Calu3 (cell line): ENCODE measurements at regions of chr16 and their contacts with region 1.

Region 1: DNA sequence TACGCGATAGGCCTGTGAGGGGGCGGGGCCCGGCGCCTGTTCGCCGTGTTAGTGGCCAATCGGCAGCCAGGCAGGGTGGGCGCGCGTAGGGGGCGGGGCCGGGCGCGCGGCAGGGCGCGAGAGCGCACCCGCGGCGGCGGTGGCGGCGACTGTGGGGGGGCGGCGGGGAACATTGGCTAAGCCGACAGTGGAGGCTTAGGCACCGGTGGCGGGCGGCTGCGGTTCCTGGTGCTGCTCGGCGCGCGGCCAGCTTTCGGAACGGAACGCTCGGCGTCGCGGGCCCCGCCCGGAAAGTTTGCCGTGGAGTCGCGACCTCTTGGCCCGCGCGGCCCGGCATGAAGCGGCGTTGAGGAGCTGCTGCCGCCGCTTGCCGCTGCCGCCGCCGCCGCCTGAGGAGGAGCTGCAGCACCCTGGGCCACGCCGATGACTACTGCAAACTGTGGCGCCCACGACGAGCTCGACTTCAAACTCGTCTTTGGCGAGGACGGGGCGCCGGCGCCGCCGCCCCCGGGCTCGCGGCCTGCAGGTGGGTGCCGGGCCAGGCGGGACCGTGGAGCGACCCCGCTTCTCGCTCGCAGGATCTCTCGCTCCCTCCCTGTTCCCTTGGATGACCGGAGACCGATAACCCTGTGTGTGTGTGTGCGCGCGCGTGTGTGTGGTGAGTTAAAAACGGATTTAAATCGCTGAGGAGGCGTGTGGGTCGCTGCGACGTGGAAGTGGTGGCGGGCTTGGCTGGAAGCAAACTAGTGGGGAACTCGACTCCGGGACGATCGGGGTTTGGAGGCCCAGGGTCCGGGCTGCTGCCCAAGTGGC is at the start of gene NFATC3:
- DNase-seq: peak; percentile 99
- H3K4me3 Mint-ChIP-seq: peak within 1 kb of the TSS; percentile 84
- H3K27ac Mint-ChIP-seq: peak within 1 kb of the TSS; percentile 75
- H3K4me1 Mint-ChIP-seq: peaks cover 28% of the 10 kb centered on the region
- H3K27me3 Mint-ChIP-seq: no peaks in the 10 kb centered on the region
- CTCF ChIP-seq: no peak
- total RNA-seq, gene NFATC3: 39.3 and 39.9 TPM in 2 replicates

Region 2: GRCh38 chr16:67806428-67807147 is 278.9 kb before region 1 on chr16 and contains the starts of genes RANBP10 and TSNAXIP1:
- CTCF ChIA-PET with region 1: no interaction called
- intact Hi-C with region 1: loop called (anchors 5 kb)
- DNase-seq: peak; percentile 98
- H3K4me3 Mint-ChIP-seq: peak within 1 kb of the TSS; percentile 96
- H3K27ac Mint-ChIP-seq: peak within 1 kb of the TSS; percentile 76
- H3K4me1 Mint-ChIP-seq: peaks cover 11% of the 10 kb centered on the region
- H3K27me3 Mint-ChIP-seq: no peaks in the 10 kb centered on the region
- CTCF ChIP-seq: no peak
- total RNA-seq, gene RANBP10: 25.5 and 28.2 TPM in 2 replicates
- total RNA-seq, gene TSNAXIP1: 1.0 and 1.3 TPM in 2 replicates

Region 3: DNA sequence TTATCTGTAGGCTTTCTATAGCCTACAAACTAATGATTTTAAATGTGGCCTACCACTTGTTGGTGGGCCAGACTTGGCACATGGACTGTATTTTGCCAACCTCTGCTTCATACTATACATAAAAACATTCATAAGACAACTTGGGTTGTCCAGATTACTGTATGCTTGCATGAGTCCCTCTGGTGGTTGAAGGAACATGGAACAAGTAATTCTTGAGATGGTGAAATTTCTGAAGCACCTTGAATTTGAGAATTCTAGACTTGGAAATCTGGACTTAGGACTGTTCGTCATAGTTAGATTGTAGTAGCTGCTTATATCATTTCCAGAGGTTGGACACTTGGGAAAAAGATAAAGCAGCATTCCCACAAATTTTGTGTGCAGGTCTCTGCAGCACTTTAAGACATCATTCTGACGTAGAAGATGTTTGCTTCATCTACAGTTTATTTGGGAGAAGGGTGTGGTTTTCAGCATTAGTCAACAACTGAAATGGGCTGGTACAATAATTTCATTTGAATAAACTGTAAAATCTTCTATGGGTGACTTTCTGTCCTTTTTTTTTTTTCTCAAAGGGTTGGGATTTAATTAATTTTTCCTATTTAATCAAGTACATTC is 30.9 kb after region 1 on chr16:
- CTCF ChIA-PET with region 1: no interaction called
- intact Hi-C with region 1: no loop called
- DNase-seq: no peak
- H3K4me3 Mint-ChIP-seq: no peak overlapping the region
- H3K27ac Mint-ChIP-seq: no peak overlapping the region
- H3K4me1 Mint-ChIP-seq: peaks cover 8% of the 10 kb centered on the region
- H3K27me3 Mint-ChIP-seq: no peaks in the 10 kb centered on the region
- CTCF ChIP-seq: peak; percentile 17

Region 4: DNA sequence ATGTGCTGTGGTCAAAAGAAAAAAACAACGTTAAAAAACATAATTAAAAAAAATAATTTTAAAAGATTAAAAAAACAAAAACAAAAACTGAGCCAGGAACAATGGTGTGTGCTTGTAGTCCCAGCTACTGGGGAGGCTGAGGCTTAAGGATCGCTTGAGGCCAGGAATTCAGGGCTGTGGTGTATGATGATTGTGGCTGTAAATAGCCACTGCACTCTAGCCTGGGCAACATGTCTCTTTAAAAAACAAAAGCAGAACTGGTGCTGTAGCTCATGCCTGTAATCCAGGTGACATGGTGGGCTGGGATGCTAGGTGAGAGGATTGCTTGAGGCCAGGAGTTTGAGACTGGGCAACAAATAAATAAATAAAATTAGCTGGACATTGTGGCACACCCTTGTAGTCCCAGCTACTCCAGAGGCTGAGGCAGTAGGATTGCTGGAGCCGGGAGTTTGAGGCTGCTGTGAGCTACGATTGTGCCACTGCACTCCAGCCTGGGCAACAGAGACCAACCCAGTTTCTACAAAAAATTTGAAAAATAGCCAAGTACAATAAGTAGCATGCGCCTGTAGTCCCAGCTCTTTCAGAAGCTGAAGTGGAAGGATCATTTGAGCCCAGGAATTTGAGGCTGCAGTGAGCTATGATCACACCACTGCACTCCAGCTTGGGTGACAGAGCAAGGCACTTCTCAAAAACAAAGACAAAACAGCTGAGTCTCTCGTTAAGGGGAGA is 43.3 kb after region 1 on chr16:
- CTCF ChIA-PET with region 1: interaction called, 3 read pairs
- intact Hi-C with region 1: loop called (anchors 5 kb)
- DNase-seq: no peak
- H3K4me3 Mint-ChIP-seq: no peak overlapping the region
- H3K27ac Mint-ChIP-seq: no peak overlapping the region
- H3K4me1 Mint-ChIP-seq: peaks cover 9% of the 10 kb centered on the region
- H3K27me3 Mint-ChIP-seq: no peaks in the 10 kb centered on the region
- CTCF ChIP-seq: no peak

Region 5: GRCh38 chr16:68166264-68166663 is 80.8 kb after region 1 on chr16:
- CTCF ChIA-PET with region 1: interaction called, 11 read pairs
- intact Hi-C with region 1: no loop called
- DNase-seq: no peak
- H3K4me3 Mint-ChIP-seq: no peak overlapping the region
- H3K27ac Mint-ChIP-seq: no peak overlapping the region
- H3K4me1 Mint-ChIP-seq: no peaks in the 10 kb centered on the region
- H3K27me3 Mint-ChIP-seq: no peaks in the 10 kb centered on the region
- CTCF ChIP-seq: no peak

Region 6: GRCh38 chr16:68229431-68230198 is 144.2 kb after region 1 on chr16:
- CTCF ChIA-PET with region 1: interaction called, 6 read pairs
- intact Hi-C with region 1: loop called (anchors 2 kb)
- DNase-seq: peak; percentile 63
- H3K4me3 Mint-ChIP-seq: no peak overlapping the region
- H3K27ac Mint-ChIP-seq: no peak overlapping the region
- H3K4me1 Mint-ChIP-seq: peaks cover 22% of the 10 kb centered on the region
- H3K27me3 Mint-ChIP-seq: no peaks in the 10 kb centered on the region
- CTCF ChIP-seq: peak; percentile 90

Region 7: GRCh38 chr16:68298907-68299561 is 213.6 kb after region 1 on chr16:
- CTCF ChIA-PET with region 1: no interaction called
- intact Hi-C with region 1: no loop called
- DNase-seq: no peak
- H3K4me3 Mint-ChIP-seq: no peak overlapping the region
- H3K27ac Mint-ChIP-seq: no peak overlapping the region
- H3K4me1 Mint-ChIP-seq: no peaks in the 10 kb centered on the region
- H3K27me3 Mint-ChIP-seq: no peaks in the 10 kb centered on the region
- CTCF ChIP-seq: no peak